Naive thymus-derived CD4-positive, alpha-beta T cell (primary cell): ENCODE measurements at regions of chr9 and their contacts with region 1.

Region 1: DNA sequence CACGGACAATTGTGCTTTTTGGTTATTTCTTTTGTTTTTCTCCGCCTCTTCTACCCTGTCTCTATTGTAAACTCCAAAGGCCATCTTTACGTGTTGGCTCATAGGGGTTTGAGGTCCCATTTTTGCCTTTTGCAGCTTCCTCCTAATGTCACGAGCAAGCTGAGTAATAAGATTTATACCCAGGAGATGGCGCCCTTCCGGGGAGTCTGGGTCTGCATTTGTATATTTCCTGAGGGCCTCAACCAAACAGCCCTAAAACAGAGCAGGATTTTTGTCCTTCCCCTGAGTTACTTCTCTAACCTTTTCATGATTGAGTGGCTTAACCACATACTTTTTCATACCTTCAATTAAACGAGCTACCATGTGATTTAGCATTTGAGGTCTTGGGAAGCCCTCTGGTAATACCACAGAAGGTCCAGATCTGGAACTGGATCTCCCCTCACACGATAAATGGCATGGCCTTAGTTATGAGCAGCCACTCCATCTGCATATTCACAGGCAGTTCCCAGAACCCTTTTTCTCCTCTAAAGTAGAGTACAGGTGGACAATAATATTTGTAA is 11.2 kb upstream of the CFAP95 start:
- DNase-seq: peak in 6 of 9 donors; percentile 6 to 57 (median 50)
- ATAC-seq: peak; percentile 47
- H3K4me3 ChIP-seq: no peak overlapping the region
- H3K4me3 Mint-ChIP-seq: no peak overlapping the region
- H3K27ac ChIP-seq: no peak overlapping the region
- H3K27ac Mint-ChIP-seq: no peak overlapping the region
- H3K4me1 ChIP-seq: no peaks in the 10 kb centered on the region
- H3K4me1 Mint-ChIP-seq: peaks cover 0 to 28% (median 0%) of the 10 kb centered on the region in 7 donors
- H3K27me3 ChIP-seq: no peaks in the 10 kb centered on the region
- H3K27me3 Mint-ChIP-seq: peaks cover 0 to 9% (median 3%) of the 10 kb centered on the region in 5 donors

Region 2: GRCh38 chr9:69433392-69433791 is 376.0 kb before region 1 on chr9:
- CTCF ChIA-PET with region 1: no interaction called
- POLR2A ChIA-PET with region 1: no interaction called
- intact Hi-C with region 1: no loop called
- DNase-seq: no peak
- ATAC-seq: no peak
- H3K4me3 ChIP-seq: no peak overlapping the region
- H3K4me3 Mint-ChIP-seq: no peak overlapping the region
- H3K27ac ChIP-seq: no peak overlapping the region
- H3K27ac Mint-ChIP-seq: no peak overlapping the region
- H3K4me1 ChIP-seq: no peaks in the 10 kb centered on the region
- H3K4me1 Mint-ChIP-seq: no peaks in the 10 kb centered on the region
- H3K27me3 ChIP-seq: no peaks in the 10 kb centered on the region
- H3K27me3 Mint-ChIP-seq: peaks cover 0 to 4% (median 0%) of the 10 kb centered on the region in 5 donors

Region 3: DNA sequence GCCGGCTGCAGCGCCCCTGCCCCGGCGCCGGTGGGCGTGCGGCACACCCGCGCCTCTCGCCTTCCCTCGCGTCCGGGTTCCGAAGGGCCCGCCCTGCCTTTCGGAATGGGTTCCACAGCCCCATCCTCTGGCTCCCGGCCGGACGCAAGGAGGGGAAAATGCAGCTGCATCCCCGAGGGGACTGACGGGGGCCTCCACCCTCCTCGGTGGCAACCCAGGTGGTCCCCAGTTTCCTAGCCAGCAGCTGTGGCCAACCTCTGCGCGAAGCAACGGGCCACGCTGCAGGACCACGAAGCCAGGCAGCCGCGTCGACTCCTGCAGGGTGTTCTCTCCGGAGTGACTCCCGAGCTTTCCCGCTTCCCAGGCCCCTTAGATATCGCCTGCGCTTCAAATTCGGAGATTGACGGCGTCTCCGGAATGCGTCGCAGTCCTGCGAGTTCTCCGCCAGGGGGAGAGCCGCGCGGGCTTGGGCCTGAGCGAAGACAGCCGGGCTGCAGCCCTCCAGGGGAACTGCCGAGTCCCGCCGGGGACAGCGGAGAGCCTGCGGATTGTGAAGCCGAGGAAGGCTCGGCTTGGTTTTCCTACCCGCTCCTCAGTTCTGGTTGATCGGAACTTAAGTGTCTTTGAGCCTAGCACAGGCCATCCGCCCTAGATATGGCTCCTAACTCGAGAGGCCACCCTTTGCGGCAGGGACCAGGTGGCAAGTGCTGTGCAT is 136.6 kb before region 1 on chr9:
- CTCF ChIA-PET with region 1: no interaction called
- POLR2A ChIA-PET with region 1: no interaction called
- intact Hi-C with region 1: loop called in 1 of 2 experiments (anchors 5 kb)
- DNase-seq: peak; percentile 51 to 78 (median 70)
- ATAC-seq: peak; percentile 88
- H3K4me3 ChIP-seq: peak overlapping the region; percentile 84
- H3K4me3 Mint-ChIP-seq: peak overlapping the region; percentile 80 to 91 (median 86)
- H3K27ac ChIP-seq: no peak overlapping the region
- H3K27ac Mint-ChIP-seq: peak overlapping the region in 7 of 9 donors; percentile 17 to 62 (median 59)
- H3K4me1 ChIP-seq: peaks cover 5 to 6% of the 10 kb centered on the region in 2 donors
- H3K4me1 Mint-ChIP-seq: peaks cover 0 to 35% (median 28%) of the 10 kb centered on the region in 7 donors
- H3K27me3 ChIP-seq: no peaks in the 10 kb centered on the region
- H3K27me3 Mint-ChIP-seq: peaks cover 0 to 47% (median 9%) of the 10 kb centered on the region in 5 donors

Region 4: DNA sequence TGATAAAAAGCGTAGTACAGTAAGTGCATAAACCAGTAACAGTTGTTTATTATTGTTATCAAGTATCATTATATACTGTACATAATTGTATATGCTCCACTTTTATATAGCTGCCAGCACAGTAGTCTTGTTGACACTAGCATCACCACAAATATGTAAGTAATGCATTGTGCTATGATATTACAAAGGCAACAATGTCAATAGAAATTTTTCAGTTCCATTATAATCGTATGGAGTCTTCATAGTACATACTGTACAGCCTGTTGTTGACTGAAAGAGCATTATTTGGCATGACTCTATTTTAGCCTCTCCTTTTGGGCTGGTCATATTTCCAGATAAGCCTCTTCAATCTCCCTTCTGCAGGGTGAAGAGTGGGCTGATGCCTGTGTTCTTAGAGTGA is 51.6 kb after region 1 on chr9:
- CTCF ChIA-PET with region 1: interaction called, 4 read pairs
- POLR2A ChIA-PET with region 1: no interaction called
- intact Hi-C with region 1: loop called in 1 of 2 experiments (anchors 1 kb)
- DNase-seq: no peak
- ATAC-seq: no peak
- H3K4me3 ChIP-seq: no peak overlapping the region
- H3K4me3 Mint-ChIP-seq: no peak overlapping the region
- H3K27ac ChIP-seq: no peak overlapping the region
- H3K27ac Mint-ChIP-seq: no peak overlapping the region
- H3K4me1 ChIP-seq: no peaks in the 10 kb centered on the region
- H3K4me1 Mint-ChIP-seq: peaks cover 0 to 8% (median 4%) of the 10 kb centered on the region in 7 donors
- H3K27me3 ChIP-seq: no peaks in the 10 kb centered on the region
- H3K27me3 Mint-ChIP-seq: peaks cover 0 to 12% (median 11%) of the 10 kb centered on the region in 5 donors

Region 5: GRCh38 chr9:69877854-69878514 is 68.6 kb after region 1 on chr9:
- CTCF ChIA-PET with region 1: interaction called, 4 read pairs
- POLR2A ChIA-PET with region 1: no interaction called
- intact Hi-C with region 1: loop called (anchors 1 kb)
- DNase-seq: peak in 5 of 9 donors; percentile 2 to 25 (median 6)
- ATAC-seq: no peak
- H3K4me3 ChIP-seq: no peak overlapping the region
- H3K4me3 Mint-ChIP-seq: no peak overlapping the region
- H3K27ac ChIP-seq: no peak overlapping the region
- H3K27ac Mint-ChIP-seq: no peak overlapping the region
- H3K4me1 ChIP-seq: no peaks in the 10 kb centered on the region
- H3K4me1 Mint-ChIP-seq: no peaks in the 10 kb centered on the region
- H3K27me3 ChIP-seq: no peaks in the 10 kb centered on the region
- H3K27me3 Mint-ChIP-seq: peaks cover 0 to 37% (median 2%) of the 10 kb centered on the region in 5 donors

Region 6: DNA sequence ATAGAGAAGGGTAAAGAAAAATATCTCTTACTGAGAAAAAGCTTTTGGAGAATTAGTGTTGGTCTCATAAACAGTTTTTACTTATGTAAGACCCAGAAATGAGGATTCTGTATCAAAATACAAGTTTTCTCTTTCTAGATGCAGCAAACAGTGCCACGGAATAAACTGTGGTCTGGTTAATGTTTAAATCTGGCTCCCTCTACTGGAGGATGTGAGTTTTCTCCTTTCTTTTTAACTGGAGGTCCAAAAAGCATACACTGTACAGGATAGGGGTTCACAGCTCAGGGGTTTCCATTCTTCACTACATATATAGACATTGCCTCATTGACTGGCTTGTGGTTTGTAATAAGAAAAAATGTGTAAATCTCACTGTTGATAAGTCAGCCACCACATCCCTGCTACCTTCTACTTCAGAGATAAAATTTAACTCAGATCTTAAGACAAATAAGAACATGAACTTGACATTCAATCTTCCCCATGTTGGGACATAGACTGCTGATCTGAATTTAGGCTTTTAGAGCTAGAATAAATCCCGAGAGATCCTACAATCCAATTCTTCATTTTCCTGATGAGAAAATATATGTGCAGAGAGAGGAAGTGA is 110.2 kb after region 1 on chr9:
- CTCF ChIA-PET with region 1: interaction called, 5 read pairs
- POLR2A ChIA-PET with region 1: no interaction called
- intact Hi-C with region 1: loop called (anchors 1 kb)
- DNase-seq: peak in 6 of 9 donors; percentile 14 to 52 (median 41)
- ATAC-seq: peak; percentile 85
- H3K4me3 ChIP-seq: no peak overlapping the region
- H3K4me3 Mint-ChIP-seq: no peak overlapping the region
- H3K27ac ChIP-seq: no peak overlapping the region
- H3K27ac Mint-ChIP-seq: no peak overlapping the region
- H3K4me1 ChIP-seq: no peaks in the 10 kb centered on the region
- H3K4me1 Mint-ChIP-seq: no peaks in the 10 kb centered on the region
- H3K27me3 ChIP-seq: no peaks in the 10 kb centered on the region
- H3K27me3 Mint-ChIP-seq: peaks cover 5 to 21% (median 17%) of the 10 kb centered on the region in 5 donors